AG04450 (cell line): ENCODE measurements at regions of chr1 and their contacts with region 1.

Region 1: DNA sequence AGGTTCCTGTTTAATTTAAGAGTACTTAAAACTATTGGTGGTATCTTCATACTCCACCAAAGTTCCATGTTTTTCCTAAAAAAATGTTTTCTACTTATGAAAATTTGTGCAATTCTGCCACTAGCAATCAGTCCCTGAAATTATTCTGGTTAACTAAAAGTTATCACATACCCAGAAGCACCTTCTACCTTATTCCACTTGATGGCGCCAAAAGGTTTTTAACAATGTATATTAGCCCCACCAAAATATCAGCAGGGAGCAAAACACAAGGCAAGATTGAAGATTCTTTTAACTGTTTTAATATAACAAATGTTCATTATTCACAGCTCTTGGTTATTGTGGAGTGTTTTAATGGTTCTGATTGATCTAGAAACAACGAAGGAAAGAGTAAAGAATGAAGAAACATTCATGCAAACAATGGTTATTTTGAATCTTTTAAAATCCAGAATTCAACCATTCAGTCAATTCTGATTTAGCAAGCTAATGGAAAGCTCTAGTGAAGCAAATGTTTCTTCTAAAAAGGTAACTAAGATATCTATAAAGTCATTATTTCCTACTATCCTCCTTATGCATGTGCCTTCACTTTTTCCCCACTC is 67.2 kb downstream of the TTLL7 start:
- DNase-seq: no peak
- H3K4me3 ChIP-seq: no peak overlapping the region
- H3K27ac ChIP-seq: no peak overlapping the region
- H3K27me3 ChIP-seq: no peaks in the 10 kb centered on the region
- CTCF ChIP-seq: peak; percentile 82

Region 2: GRCh38 chr1:83942914-83943313 is 11.2 kb after region 1 on chr1:
- CTCF ChIA-PET with region 1: interaction called, 14 read pairs
- POLR2A ChIA-PET with region 1: no interaction called
- DNase-seq: no peak
- H3K4me3 ChIP-seq: no peak overlapping the region
- H3K27ac ChIP-seq: no peak overlapping the region
- H3K27me3 ChIP-seq: no peaks in the 10 kb centered on the region
- CTCF ChIP-seq: no peak

Region 3: DNA sequence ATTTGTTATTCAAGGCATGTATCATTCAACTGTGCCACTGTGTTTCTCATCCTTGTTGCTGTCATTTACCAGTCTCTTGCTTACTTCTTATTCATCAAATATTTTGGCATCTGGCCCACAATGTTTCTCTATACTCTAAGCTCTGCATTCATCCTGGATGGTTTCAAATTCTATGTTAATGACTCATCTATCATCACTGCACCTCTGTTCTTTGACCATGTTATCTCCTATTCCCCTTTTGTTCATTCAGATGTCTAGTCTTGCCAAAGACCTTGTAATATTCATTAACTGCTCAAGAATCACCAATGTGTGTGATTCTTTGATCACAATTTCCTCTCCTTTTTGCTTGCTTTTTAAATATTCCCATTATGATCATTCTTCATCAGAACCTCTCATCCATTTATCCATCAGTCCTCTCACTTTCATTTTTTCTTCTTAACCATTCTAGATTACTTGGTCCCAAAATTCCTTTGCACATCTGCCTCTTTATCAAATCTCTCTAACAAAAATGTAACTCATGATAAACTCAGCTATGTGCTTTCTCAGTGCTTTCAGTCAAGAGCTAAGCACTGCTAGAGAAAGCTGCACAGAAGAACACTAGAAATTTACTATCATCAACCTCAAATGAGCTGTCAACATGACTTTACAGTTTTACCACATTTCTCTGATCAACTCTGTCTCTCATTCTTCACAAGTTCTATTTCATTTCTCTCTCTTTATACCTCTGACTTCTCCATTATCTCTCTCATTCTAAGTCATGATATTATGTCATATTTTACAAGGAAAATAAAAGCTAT is 157.9 kb after region 1 on chr1:
- CTCF ChIA-PET with region 1: no interaction called
- POLR2A ChIA-PET with region 1: no interaction called
- DNase-seq: no peak
- H3K4me3 ChIP-seq: no peak overlapping the region
- H3K27ac ChIP-seq: no peak overlapping the region
- H3K27me3 ChIP-seq: no peaks in the 10 kb centered on the region
- CTCF ChIP-seq: no peak

Region 4: DNA sequence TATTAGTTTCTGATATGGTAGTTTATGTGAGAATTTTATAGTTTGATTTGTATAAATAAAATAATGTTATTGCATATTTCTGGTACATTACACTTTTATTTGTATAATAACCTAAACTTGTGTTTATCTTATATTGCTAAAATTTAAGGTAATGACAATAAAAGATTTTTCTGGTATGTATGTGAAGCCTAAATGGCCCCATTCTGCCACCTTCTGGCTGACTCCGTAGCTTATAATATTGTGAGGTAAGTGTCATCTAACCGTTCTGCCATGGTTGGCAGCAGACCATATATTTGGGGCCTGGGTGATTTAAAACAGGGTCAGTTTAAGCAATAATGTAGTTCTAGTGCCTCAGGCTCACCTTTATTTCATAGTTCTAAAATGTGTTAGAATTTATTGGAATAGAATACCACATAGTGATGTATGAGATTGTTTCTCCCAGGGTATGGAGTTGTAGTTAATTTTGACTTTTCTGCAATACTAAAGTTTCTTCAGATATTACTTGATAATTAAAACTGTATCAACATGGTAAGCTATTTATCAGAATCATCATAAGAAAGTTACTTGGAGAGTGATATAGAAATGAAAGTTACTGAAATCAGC is 191.1 kb after region 1 on chr1:
- CTCF ChIA-PET with region 1: interaction called, 123 read pairs
- POLR2A ChIA-PET with region 1: no interaction called
- DNase-seq: no peak
- H3K4me3 ChIP-seq: no peak overlapping the region
- H3K27ac ChIP-seq: no peak overlapping the region
- H3K27me3 ChIP-seq: no peaks in the 10 kb centered on the region
- CTCF ChIP-seq: peak; percentile 75